ENCODE measurements at regions of chrX and their contacts with region 1.

Region 1: GRCh38 chrX:48468693-48469691 is 1.1 kb downstream of the SLC38A5 start:
- DNase-seq: peak; percentile 60
- ATAC-seq: peak; percentile 58
- H3K4me3 Mint-ChIP-seq: peak overlapping the region; percentile 93
- H3K27ac Mint-ChIP-seq: peak overlapping the region; percentile 92
- H3K4me1 Mint-ChIP-seq: peaks cover 37% of the 10 kb centered on the region
- H3K27me3 Mint-ChIP-seq: no peaks in the 10 kb centered on the region
- CTCF ChIP-seq: no peak

Region 2: GRCh38 chrX:48083212-48083611 is 385.8 kb before region 1 on chrX:
- CTCF ChIA-PET with region 1: interaction called, 3 read pairs
- POLR2A ChIA-PET with region 1: no interaction called
- intact Hi-C with region 1: loop called (anchors 10 kb)
- DNase-seq: peak; percentile 66
- ATAC-seq: peak; percentile 90
- H3K4me3 Mint-ChIP-seq: no peak overlapping the region
- H3K27ac Mint-ChIP-seq: no peak overlapping the region
- H3K4me1 Mint-ChIP-seq: no peaks in the 10 kb centered on the region
- H3K27me3 Mint-ChIP-seq: no peaks in the 10 kb centered on the region
- CTCF ChIP-seq: peak; percentile 66

Region 3: GRCh38 chrX:48521353-48522243 is 52.6 kb after region 1 on chrX and contains the start of gene EBP:
- CTCF ChIA-PET with region 1: no interaction called
- POLR2A ChIA-PET with region 1: no interaction called
- intact Hi-C with region 1: no loop called
- DNase-seq: peak; percentile 98
- ATAC-seq: peak; percentile 92
- H3K4me3 Mint-ChIP-seq: peak within 1 kb of the TSS; percentile 91
- H3K27ac Mint-ChIP-seq: peak within 1 kb of the TSS; percentile 99
- H3K4me1 Mint-ChIP-seq: peaks cover 32% of the 10 kb centered on the region
- H3K27me3 Mint-ChIP-seq: no peaks in the 10 kb centered on the region
- CTCF ChIP-seq: no peak
- total RNA-seq, gene EBP: 159 to 164 TPM